Natural killer cell (primary cell): ENCODE measurements at regions of chr12 and their contacts with region 1.

Region 1: DNA sequence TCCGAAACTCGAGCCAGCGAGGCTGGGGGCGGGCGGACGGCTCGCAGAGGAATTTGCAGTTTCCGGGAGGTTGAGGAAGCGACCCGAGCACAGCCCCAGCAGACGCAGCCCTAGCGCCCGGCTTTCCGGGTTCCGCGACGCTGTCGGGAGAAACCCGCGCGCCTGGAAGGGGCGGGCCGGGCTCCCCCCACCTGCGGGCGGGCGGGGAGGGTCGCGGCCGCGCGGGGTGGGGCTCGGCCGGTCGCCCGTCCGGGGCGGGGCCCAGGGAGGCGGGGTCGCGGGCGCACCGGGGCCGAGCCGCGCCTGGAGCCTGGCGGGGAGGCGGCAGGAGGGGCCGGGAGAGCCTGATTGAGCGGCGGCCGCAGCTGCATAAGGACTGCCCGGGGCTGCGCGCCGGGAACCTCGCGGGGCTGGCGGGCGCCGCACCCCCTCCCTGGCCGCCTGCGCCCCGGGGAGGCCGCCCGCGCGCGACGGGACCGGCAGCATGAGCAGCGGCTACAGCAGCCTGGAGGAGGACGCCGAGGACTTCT is at the start of gene RASSF3:
- DNase-seq: peak; percentile 57 to 89
- ATAC-seq: peak; percentile 32 to 64 (median 50)
- H3K4me3 ChIP-seq: peak within 1 kb of the TSS; percentile 78
- H3K4me3 Mint-ChIP-seq: peak within 1 kb of the TSS; percentile 98
- H3K27ac ChIP-seq: peak within 1 kb of the TSS; percentile 79
- H3K27ac Mint-ChIP-seq: peak within 1 kb of the TSS; percentile 90 to 97
- H3K4me1 ChIP-seq: peaks cover 28% of the 10 kb centered on the region
- H3K4me1 Mint-ChIP-seq: peaks cover 39 to 47% of the 10 kb centered on the region in 2 donors
- H3K27me3 ChIP-seq: no peaks in the 10 kb centered on the region
- H3K27me3 Mint-ChIP-seq: no peaks in the 10 kb centered on the region
- CTCF ChIP-seq: no peak
- total RNA-seq, gene RASSF3: 63.4 to 105 (median 80.5) TPM

Region 2: GRCh38 chr12:64544371-64545080 is 65.7 kb before region 1 on chr12:
- intact Hi-C with region 1: loop called (anchors 5 kb)
- DNase-seq: no peak
- ATAC-seq: no peak
- H3K4me3 ChIP-seq: no peak overlapping the region
- H3K4me3 Mint-ChIP-seq: no peak overlapping the region
- H3K27ac ChIP-seq: no peak overlapping the region
- H3K27ac Mint-ChIP-seq: no peak overlapping the region
- H3K4me1 ChIP-seq: no peaks in the 10 kb centered on the region
- H3K4me1 Mint-ChIP-seq: peaks cover 2% of the 10 kb centered on the region in 2 donors
- H3K27me3 ChIP-seq: peaks cover 2% of the 10 kb centered on the region
- H3K27me3 Mint-ChIP-seq: no peaks in the 10 kb centered on the region
- CTCF ChIP-seq: no peak

Region 3: DNA sequence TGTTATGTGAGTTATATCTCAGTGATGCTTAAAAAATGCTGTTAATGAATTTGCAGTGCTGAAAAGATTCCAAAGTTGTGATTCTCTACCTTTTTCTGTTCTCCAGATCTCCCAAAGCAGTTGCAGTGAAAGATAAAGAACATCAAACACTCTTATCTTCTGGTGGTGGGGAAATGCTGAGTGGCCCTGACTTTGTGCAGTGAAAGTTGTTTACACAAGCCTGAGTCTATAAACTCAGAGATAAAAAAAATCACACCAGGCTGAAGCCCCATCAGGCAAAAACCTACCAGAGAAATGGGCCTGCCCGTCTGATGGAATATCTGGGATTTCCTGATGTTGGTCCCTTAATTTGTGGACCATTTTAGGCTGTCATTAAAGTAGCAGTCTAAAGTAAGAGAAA is 46.2 kb after region 1 on chr12:
- intact Hi-C with region 1: loop called (anchors 2 kb)
- DNase-seq: peak in 1 of 2 donors; percentile 14
- ATAC-seq: no peak
- H3K4me3 ChIP-seq: no peak overlapping the region
- H3K4me3 Mint-ChIP-seq: peak overlapping the region; percentile 25
- H3K27ac ChIP-seq: no peak overlapping the region
- H3K27ac Mint-ChIP-seq: peak overlapping the region; percentile 90 to 98
- H3K4me1 ChIP-seq: peaks cover 47% of the 10 kb centered on the region
- H3K4me1 Mint-ChIP-seq: peaks cover 69 to 75% of the 10 kb centered on the region in 2 donors
- H3K27me3 ChIP-seq: no peaks in the 10 kb centered on the region
- H3K27me3 Mint-ChIP-seq: no peaks in the 10 kb centered on the region
- CTCF ChIP-seq: no peak

Region 4: GRCh38 chr12:64669270-64669842 is 59.1 kb after region 1 on chr12:
- intact Hi-C with region 1: loop called (anchors 2 kb)
- DNase-seq: peak; percentile 59 to 90
- ATAC-seq: peak; percentile 81 to 95 (median 90)
- H3K4me3 ChIP-seq: peak overlapping the region; percentile 49
- H3K4me3 Mint-ChIP-seq: peak overlapping the region; percentile 82
- H3K27ac ChIP-seq: peak overlapping the region; percentile 97
- H3K27ac Mint-ChIP-seq: peak overlapping the region; percentile 91 to 93
- H3K4me1 ChIP-seq: peaks cover 85% of the 10 kb centered on the region
- H3K4me1 Mint-ChIP-seq: peaks cover 85 to 90% of the 10 kb centered on the region in 2 donors
- H3K27me3 ChIP-seq: no peaks in the 10 kb centered on the region
- H3K27me3 Mint-ChIP-seq: no peaks in the 10 kb centered on the region
- CTCF ChIP-seq: no peak

Region 5: DNA sequence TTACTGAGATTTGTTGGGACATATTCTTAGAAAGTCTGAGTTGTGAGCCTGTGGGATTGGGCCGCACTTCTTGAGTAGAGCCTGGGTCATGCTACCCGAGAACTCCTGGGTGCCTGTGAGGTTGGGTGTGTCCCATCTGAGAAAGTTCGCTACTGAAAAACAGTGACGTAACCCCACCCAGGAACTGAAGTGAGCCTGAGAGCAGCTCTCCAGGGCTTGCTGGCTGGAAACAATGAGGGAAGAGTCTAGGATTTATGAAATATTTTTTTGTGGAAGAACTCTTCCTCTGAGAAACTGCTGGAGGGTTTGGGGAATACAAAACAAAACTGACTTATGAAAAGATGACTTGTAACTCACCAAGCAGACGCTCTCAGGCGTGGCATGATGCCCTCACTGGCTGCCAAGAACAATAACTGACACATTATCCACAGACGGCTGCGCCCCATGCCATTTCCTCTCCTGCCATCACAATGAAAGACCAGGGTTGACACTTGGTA is 69.3 kb after region 1 on chr12:
- intact Hi-C with region 1: loop called (anchors 5 kb)
- DNase-seq: peak; percentile 65 to 89
- ATAC-seq: peak; percentile 71 to 86 (median 85)
- H3K4me3 ChIP-seq: peak overlapping the region; percentile 17
- H3K4me3 Mint-ChIP-seq: peak overlapping the region; percentile 74
- H3K27ac ChIP-seq: peak overlapping the region; percentile 96
- H3K27ac Mint-ChIP-seq: peak overlapping the region; percentile 91 to 93
- H3K4me1 ChIP-seq: peaks cover 94% of the 10 kb centered on the region
- H3K4me1 Mint-ChIP-seq: peaks cover 74 to 77% of the 10 kb centered on the region in 2 donors
- H3K27me3 ChIP-seq: no peaks in the 10 kb centered on the region
- H3K27me3 Mint-ChIP-seq: no peaks in the 10 kb centered on the region
- CTCF ChIP-seq: no peak

Region 6: GRCh38 chr12:64696080-64696741 is 86.0 kb after region 1 on chr12:
- intact Hi-C with region 1: loop called (anchors 1 kb)
- DNase-seq: peak in 1 of 2 donors; percentile 54
- ATAC-seq: no peak
- H3K4me3 ChIP-seq: no peak overlapping the region
- H3K4me3 Mint-ChIP-seq: peak overlapping the region; percentile 42
- H3K27ac ChIP-seq: no peak overlapping the region
- H3K27ac Mint-ChIP-seq: peak overlapping the region; percentile 58 to 70
- H3K4me1 ChIP-seq: peaks cover 35% of the 10 kb centered on the region
- H3K4me1 Mint-ChIP-seq: peaks cover 58 to 67% of the 10 kb centered on the region in 2 donors
- H3K27me3 ChIP-seq: no peaks in the 10 kb centered on the region
- H3K27me3 Mint-ChIP-seq: no peaks in the 10 kb centered on the region
- CTCF ChIP-seq: no peak